ENCODE measurements at regions of chr4 and their contacts with region 1.

Region 1: GRCh38 chr4:139416073-139416673 is 37.7 kb upstream of the RAB33B start:
- DNase-seq: peak; percentile 10
- H3K4me3 Mint-ChIP-seq: no peak overlapping the region
- H3K27ac Mint-ChIP-seq: no peak overlapping the region
- H3K4me1 Mint-ChIP-seq: peaks cover 14% of the 10 kb centered on the region
- H3K27me3 Mint-ChIP-seq: no peaks in the 10 kb centered on the region

Region 2: DNA sequence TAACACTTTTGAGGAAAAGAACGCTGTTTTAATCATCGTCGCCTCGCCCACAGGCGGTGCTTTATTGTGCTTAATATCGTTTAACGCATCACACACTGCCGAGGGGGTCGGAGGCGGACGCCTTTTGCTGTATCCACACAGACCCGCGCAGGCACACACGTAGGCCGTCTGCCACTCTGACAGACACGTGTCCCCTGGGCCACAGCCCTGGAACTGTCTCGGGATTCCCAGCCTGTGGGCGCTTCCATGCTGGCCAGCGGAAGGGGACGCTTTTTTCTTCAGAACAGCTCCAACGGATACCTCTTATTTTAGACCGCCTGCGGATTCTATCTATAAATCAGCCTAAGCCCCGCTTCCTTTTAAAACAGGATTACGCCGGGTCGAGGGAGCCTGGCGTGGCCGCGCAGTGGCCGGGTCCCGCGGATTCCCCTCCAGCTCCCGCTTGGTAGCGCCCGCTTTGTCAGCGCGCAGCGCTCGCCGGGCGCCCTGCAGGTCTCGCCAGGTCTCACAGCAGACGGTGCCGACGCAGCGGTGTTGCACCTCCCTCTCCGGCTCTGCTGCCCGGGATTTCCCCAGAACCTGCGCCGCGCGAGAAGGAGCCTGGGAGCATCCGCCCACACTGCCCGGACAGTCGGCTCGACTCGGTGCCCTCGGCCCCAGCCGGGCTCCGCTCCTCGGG is 400.8 kb before region 1 on chr4 and contains the start of gene NOCT:
- CTCF ChIA-PET with region 1: interaction called, 3 read pairs
- intact Hi-C with region 1: loop called (anchors 1 kb)
- DNase-seq: peak; percentile 97
- H3K4me3 Mint-ChIP-seq: peak within 1 kb of the TSS; percentile 91
- H3K27ac Mint-ChIP-seq: peak within 1 kb of the TSS; percentile 96
- H3K4me1 Mint-ChIP-seq: peaks cover 48% of the 10 kb centered on the region
- H3K27me3 Mint-ChIP-seq: no peaks in the 10 kb centered on the region
- total RNA-seq, gene NOCT: 9.3 to 10.4 TPM

Region 3: DNA sequence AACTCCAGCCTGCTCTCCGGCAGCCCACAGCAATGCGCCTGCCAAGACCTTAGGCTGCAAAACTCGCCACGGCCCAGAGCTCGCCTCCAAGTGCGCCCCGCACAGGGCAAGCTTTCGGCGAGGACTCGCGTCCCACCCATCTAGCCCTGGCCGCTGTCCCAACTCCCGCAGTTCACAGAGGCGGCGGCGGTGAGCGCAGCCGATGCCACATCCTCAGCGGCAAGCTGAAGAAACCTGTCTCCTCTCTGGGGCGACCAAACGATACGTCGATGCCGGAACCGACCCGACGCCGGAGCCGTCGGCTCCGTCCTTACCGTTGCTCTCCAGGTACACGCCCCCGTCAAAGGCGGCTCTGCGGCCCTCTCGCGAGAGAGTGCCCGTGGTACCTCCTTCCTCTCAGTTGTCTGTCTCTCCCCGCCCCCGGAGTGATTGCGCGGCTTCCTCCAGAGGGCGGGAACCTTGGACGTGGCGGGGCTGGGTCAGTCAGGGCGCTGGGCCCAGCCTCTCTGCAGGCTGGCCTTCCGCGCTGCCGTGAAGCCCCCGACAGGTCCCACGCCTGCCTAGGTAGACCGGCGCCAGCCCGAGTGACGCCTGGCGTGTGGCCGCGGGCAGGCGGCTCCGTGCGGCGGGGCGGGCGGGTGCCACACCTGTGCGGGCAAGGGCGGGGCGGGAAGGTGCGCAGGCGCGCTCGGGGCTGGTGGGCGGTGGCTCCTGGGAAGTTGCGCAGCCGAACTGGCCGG is 37.4 kb after region 1 on chr4:
- CTCF ChIA-PET with region 1: interaction called, 4 read pairs
- intact Hi-C with region 1: loop called (anchors 1 kb)
- DNase-seq: peak; percentile 98
- H3K4me3 Mint-ChIP-seq: peak overlapping the region; percentile 97
- H3K27ac Mint-ChIP-seq: peak overlapping the region; percentile 98
- H3K4me1 Mint-ChIP-seq: peaks cover 50% of the 10 kb centered on the region
- H3K27me3 Mint-ChIP-seq: no peaks in the 10 kb centered on the region

Region 4: GRCh38 chr4:139501927-139502899 is 86.0 kb after region 1 on chr4:
- CTCF ChIA-PET with region 1: no interaction called
- intact Hi-C with region 1: loop called (anchors 1 kb)
- DNase-seq: no peak
- H3K4me3 Mint-ChIP-seq: no peak overlapping the region
- H3K27ac Mint-ChIP-seq: no peak overlapping the region
- H3K4me1 Mint-ChIP-seq: no peaks in the 10 kb centered on the region
- H3K27me3 Mint-ChIP-seq: peaks cover 2% of the 10 kb centered on the region

Region 5: DNA sequence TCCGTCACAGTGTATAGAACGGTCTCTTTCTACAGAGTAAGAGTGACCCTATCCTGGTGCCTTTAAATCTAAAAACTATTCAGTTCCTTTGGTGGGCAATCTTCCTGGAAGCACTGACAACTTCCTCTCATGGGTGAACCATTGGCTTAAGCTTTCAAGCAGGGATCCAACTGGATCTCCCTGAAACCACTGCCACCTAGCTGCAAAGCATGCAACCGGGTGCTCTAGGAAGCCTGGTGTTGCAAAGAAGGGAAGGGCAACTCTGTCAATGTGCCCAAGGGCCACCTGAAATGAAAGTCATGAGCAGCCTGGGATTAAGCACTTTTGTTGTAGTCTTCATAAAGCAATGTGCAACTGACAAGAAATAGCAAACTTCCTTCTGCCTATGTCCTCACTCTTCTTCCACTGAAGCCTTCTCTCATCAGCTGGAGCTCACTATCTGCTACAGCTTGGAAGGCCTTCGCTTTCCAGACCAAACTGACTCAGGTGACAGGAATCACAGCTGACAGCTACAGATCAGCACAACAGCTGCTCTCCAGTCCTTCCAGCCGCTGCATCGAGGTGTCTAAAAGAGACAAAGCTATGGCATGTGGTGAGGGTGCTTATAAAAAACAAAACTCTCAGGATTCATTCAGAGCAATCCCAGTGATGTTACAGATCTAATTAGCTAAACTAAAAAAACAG is 93.7 kb after region 1 on chr4:
- CTCF ChIA-PET with region 1: no interaction called
- intact Hi-C with region 1: loop called (anchors 1 kb)
- DNase-seq: peak; percentile 16
- H3K4me3 Mint-ChIP-seq: no peak overlapping the region
- H3K27ac Mint-ChIP-seq: no peak overlapping the region
- H3K4me1 Mint-ChIP-seq: no peaks in the 10 kb centered on the region
- H3K27me3 Mint-ChIP-seq: no peaks in the 10 kb centered on the region

Region 6: GRCh38 chr4:139530833-139531427 is 114.8 kb after region 1 on chr4:
- CTCF ChIA-PET with region 1: interaction called, 4 read pairs
- intact Hi-C with region 1: loop called (anchors 1 kb)
- DNase-seq: peak; percentile 67
- H3K4me3 Mint-ChIP-seq: no peak overlapping the region
- H3K27ac Mint-ChIP-seq: no peak overlapping the region
- H3K4me1 Mint-ChIP-seq: peaks cover 3% of the 10 kb centered on the region
- H3K27me3 Mint-ChIP-seq: no peaks in the 10 kb centered on the region

Region 7: GRCh38 chr4:139564502-139564901 is 148.3 kb after region 1 on chr4:
- CTCF ChIA-PET with region 1: interaction called, 4 read pairs
- intact Hi-C with region 1: loop called (anchors 2 kb)
- DNase-seq: peak; percentile 7
- H3K4me3 Mint-ChIP-seq: no peak overlapping the region
- H3K27ac Mint-ChIP-seq: no peak overlapping the region
- H3K4me1 Mint-ChIP-seq: peaks cover 10% of the 10 kb centered on the region
- H3K27me3 Mint-ChIP-seq: no peaks in the 10 kb centered on the region

Measured in activated naive CD4-positive, alpha-beta T cell treated with anti-CD3 and anti-CD28 coated beads for 36 hours (primary cell).